Ovary (tissue), 10 donors: ENCODE measurements at regions of chr7 and their contacts with region 1.

Region 1: DNA sequence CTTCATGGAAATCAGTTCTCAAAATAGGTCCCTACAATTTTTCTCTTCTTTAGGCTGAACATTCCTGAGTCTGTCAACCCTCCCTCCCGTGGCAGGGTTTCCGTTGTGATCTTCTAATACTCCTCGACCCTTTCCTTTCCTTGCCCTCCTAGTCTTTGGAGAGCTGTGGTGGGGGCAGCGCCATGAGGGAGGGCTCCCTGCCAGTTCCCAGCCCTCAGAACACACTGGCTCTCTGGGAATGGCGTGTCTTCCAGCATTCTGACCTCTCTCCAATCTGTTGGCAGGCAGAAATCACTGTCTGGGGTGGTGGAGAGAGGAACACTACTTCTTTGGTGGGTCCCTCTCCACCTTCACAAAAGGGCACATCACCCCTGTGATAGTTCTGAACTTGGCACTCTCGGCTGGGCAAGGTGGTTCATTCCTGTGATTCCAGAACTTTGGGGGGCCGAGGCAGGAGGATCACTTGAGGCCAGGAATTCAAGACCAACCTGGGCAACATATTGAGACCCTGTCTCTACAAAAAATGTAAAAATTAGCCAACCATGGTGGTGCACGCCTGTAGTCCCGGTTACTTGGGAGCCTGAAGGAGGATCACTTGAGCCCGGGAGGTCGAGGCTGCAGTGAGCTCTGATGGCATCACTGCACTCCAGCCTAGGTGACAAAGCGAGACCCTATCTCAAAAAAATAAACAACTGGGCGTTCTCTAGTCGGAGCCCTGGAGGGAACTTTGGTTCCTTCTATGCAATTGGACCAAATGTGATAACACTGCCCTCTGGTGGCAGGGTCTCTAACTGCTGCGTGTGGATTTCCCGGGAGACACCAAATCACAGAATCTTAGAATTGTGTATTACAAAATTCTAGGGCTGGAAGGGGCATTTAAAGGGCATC is 13.1 kb upstream of the ARPC1A start:
- DNase-seq: peak; percentile 49 to 78 (median 76)
- H3K4me3 ChIP-seq: no peak overlapping the region
- H3K27ac ChIP-seq: no peak overlapping the region
- H3K4me1 ChIP-seq: no peaks in the 10 kb centered on the region
- H3K27me3 ChIP-seq: no peaks in the 10 kb centered on the region
- CTCF ChIP-seq: peak; percentile 67 to 74 (median 72)
- EP300 ChIP-seq: no peak
- POLR2A ChIP-seq: no peak

Region 2: DNA sequence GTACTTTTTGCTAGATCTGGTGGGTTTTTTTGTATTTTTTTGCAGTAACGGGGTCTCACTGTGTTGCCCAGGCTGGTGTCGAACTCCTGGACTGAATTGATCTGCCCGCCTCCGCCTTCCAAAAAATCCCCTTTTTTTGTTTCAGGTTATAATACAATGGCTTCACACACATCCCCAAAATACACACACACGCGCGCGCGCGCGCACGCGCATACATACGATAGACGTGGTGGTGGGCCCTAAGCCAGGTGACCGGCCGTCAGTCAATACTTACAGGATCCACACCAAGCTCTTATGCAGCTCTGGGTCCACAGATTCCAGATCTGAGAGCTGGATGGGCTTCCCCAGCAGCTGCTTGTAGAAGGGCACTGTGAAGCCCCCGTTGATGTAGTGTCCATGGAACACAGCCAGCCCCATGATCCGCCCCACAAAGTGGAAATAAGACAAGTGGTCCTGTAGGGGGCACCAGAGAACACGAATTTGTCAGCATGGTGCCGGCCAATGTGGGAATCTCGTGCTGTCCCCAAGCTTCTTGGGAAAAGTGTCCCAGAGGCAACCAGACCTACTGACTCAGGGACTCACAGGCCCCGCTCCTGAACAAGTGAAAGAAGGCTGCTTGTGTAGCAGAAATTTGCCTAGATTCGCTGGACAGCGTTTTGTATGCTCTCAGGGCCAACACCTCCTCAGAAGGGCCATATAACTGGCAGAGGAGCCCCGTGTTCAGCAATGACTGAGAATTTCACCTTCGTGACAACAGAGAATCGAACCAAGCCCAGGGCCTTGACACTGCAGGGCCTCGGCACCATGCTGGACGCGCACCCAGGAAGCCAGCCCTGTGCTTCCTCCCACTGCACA is 272.2 kb before region 1 on chr7:
- intact Hi-C with region 1: loop called (anchors 1 to 10 kb)
- DNase-seq: peak; percentile 80 to 89 (median 85)
- H3K4me3 ChIP-seq: no peak overlapping the region
- H3K27ac ChIP-seq: peak overlapping the region in 1 of 2 donors; percentile 20
- H3K4me1 ChIP-seq: no peaks in the 10 kb centered on the region
- H3K27me3 ChIP-seq: no peaks in the 10 kb centered on the region
- CTCF ChIP-seq: peak; percentile 54 to 83 (median 82)
- EP300 ChIP-seq: no peak
- POLR2A ChIP-seq: no peak

Region 3: GRCh38 chr7:99155213-99155612 is 157.3 kb before region 1 on chr7:
- intact Hi-C with region 1: loop called in 1 of 4 experiments (anchors 10 kb)
- DNase-seq: no peak
- H3K4me3 ChIP-seq: no peak overlapping the region
- H3K27ac ChIP-seq: no peak overlapping the region
- H3K4me1 ChIP-seq: no peaks in the 10 kb centered on the region
- H3K27me3 ChIP-seq: no peaks in the 10 kb centered on the region
- CTCF ChIP-seq: no peak
- EP300 ChIP-seq: no peak
- POLR2A ChIP-seq: no peak

Region 4: DNA sequence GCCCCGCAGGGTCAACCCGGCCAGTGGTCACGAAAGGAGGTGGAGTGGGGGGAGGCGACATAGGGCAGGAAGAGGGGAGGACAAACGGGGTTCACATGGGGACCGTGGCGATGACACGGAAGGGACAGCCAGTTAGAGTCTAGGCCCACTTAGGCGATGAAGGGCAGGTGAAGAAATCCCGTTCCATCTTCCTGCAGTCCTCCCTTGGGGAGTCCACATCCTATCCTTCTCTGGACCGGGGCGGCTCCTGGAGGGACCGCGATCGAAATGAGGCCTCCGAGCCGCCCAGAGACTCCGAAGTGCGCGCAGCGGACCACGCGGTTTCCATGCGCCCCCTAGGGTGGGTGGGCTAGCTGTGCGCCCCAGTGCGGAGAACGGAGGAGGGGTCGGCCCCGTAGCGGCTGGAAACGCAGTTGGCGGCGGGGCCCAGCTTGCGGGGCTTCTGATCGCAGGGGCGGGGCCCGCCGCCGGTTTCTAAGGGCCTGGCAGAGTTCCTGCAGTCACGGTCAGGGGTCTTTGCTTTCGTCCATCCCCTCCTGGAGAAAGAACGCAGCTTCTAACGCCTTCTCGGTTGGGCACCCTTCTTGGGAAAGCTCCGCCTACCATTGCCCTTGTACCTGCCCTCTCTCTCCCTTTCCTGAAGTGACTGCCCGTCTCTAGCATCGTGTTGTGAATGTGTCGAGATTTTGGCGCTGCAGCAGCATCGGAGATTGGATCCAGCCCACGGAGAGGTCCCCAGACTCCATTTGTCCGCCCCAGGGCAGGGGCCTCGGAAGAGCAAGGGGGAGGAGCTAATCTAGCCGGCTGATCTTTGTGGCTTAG is 267.6 kb after region 1 on chr7:
- intact Hi-C with region 1: no loop called
- DNase-seq: peak; percentile 34 to 71 (median 51)
- H3K4me3 ChIP-seq: peak overlapping the region; percentile 53
- H3K27ac ChIP-seq: no peak overlapping the region
- H3K4me1 ChIP-seq: peaks cover 4% of the 10 kb centered on the region
- H3K27me3 ChIP-seq: no peaks in the 10 kb centered on the region
- CTCF ChIP-seq: peak in 2 of 3 donors; percentile 17 to 24
- EP300 ChIP-seq: no peak
- POLR2A ChIP-seq: no peak

Region 5: GRCh38 chr7:100358027-100358865 is 1045.7 kb after region 1 on chr7 and contains the start of gene PILRB:
- intact Hi-C with region 1: loop called in 1 of 4 experiments (anchors 10 kb)
- DNase-seq: no peak
- H3K4me3 ChIP-seq: no peak within 1 kb of the TSS
- H3K27ac ChIP-seq: no peak within 1 kb of the TSS
- H3K4me1 ChIP-seq: no peaks in the 10 kb centered on the region
- H3K27me3 ChIP-seq: no peaks in the 10 kb centered on the region
- CTCF ChIP-seq: no peak
- EP300 ChIP-seq: no peak
- POLR2A ChIP-seq: no peak
- total RNA-seq, gene PILRB: 29.0 to 55.9 (median 41.1) TPM